Ascending aorta (tissue), 2 donors: ENCODE measurements at regions of chr18 and their contacts with region 1.

Region 1: DNA sequence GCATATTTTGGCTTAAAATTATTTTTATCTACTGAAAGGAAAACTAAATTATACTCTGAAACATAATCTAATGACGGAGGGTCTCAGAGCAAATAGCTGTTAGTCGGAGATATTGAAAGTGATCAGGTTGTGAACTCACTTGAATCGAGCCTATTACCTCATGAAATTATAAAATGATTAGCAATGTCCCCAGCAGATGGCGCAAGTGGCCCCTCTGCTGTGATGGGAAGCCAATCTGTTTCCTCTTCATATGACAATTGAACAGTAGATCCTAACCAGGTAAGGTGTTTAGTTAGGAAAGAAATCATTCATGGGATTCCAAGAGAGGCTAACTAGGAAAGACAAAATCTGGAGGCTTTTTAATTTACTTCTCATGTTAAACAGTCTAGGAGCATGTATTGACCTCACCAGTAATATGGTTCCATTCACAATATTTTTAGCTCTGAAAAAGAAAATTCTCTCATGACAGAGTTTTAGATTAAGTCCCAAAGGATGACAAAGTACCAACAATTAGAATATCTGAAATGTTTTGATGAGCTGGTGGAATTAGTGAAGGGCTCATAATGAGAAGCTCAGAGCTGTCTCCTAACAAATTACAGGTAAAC is 29.9 kb upstream of the MPPE1 start:
- DNase-seq: peak in 1 of 2 donors; percentile 88
- H3K4me3 ChIP-seq: no peak overlapping the region
- H3K27ac ChIP-seq: no peak overlapping the region
- H3K4me1 ChIP-seq: no peaks in the 10 kb centered on the region
- H3K27me3 ChIP-seq: no peaks in the 10 kb centered on the region
- CTCF ChIP-seq: peak; percentile 66 to 84 (median 82)

Region 2: GRCh38 chr18:11733031-11733430 is 204.9 kb before region 1 on chr18:
- intact Hi-C with region 1: loop called (anchors 2 kb)
- DNase-seq: peak in 1 of 2 donors; percentile 74
- H3K4me3 ChIP-seq: peak overlapping the region in 1 of 2 donors; percentile 36
- H3K27ac ChIP-seq: no peak overlapping the region
- H3K4me1 ChIP-seq: no peaks in the 10 kb centered on the region
- H3K27me3 ChIP-seq: no peaks in the 10 kb centered on the region
- CTCF ChIP-seq: peak; percentile 60 to 79 (median 66)

Region 3: GRCh38 chr18:11995445-11996189 is 57.6 kb after region 1 on chr18:
- intact Hi-C with region 1: loop called (anchors 1 kb)
- DNase-seq: peak in 1 of 2 donors; percentile 82
- H3K4me3 ChIP-seq: no peak overlapping the region
- H3K27ac ChIP-seq: no peak overlapping the region
- H3K4me1 ChIP-seq: peaks cover 0 to 2% of the 10 kb centered on the region in 2 donors
- H3K27me3 ChIP-seq: no peaks in the 10 kb centered on the region
- CTCF ChIP-seq: peak; percentile 54 to 88 (median 72)

Region 4: GRCh38 chr18:12038639-12039417 is 100.9 kb after region 1 on chr18:
- intact Hi-C with region 1: loop called (anchors 1 kb)
- DNase-seq: peak; percentile 25 to 91
- H3K4me3 ChIP-seq: peak overlapping the region; percentile 57 to 74
- H3K27ac ChIP-seq: no peak overlapping the region
- H3K4me1 ChIP-seq: no peaks in the 10 kb centered on the region
- H3K27me3 ChIP-seq: no peaks in the 10 kb centered on the region
- CTCF ChIP-seq: peak; percentile 95 to 100 (median 99)